ENCODE measurements at regions of chr12 and their contacts with region 1.

Region 1: GRCh38 chr12:123633379-123634141 is at the starts of genes EIF2B1 and GTF2H3:
- DNase-seq: peak; percentile 88 to 99 (median 97)
- ATAC-seq: peak; percentile 94
- H3K4me3 ChIP-seq: peak within 1 kb of the TSS; percentile 77 to 79
- H3K4me3 Mint-ChIP-seq: peak within 1 kb of the TSS; percentile 92
- H3K27ac ChIP-seq: peak within 1 kb of the TSS; percentile 90 to 93
- H3K27ac Mint-ChIP-seq: peak within 1 kb of the TSS; percentile 98
- H3K4me1 ChIP-seq: peaks cover 21% of the 10 kb centered on the region
- H3K4me1 Mint-ChIP-seq: peaks cover 42% of the 10 kb centered on the region
- H3K27me3 ChIP-seq: no peaks in the 10 kb centered on the region
- H3K27me3 Mint-ChIP-seq: no peaks in the 10 kb centered on the region
- CTCF ChIP-seq: no peak
- total RNA-seq, gene EIF2B1: 35.9 to 40.0 TPM
- total RNA-seq, gene GTF2H3: 11.8 to 15.2 TPM

Region 2: DNA sequence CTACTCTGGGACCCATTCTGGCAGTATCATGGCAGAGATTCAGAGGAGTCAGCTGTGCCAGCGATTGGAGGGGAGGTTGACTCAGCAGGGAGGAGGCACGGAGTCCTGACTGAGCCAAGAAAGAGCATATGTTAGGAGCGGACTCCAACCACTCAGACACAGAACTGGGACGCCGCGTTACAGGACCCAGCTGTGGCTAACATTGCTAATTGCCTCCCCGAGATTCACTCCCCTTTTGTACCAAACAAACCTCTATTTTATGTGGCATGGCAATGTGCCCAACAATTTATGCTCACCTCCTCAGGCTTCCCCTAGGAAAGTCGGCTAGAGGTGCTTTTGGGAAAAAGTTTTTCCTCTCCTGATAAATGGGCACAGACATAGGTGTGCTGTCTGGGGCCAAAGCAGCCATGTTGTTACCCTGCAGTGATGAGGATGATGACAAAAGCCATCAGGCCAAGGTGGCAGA is 1195.9 kb before region 1 on chr12:
- CTCF ChIA-PET with region 1: no interaction called
- POLR2A ChIA-PET with region 1: no interaction called
- intact Hi-C with region 1: no loop called
- DNase-seq: no peak
- ATAC-seq: no peak
- H3K4me3 ChIP-seq: no peak overlapping the region
- H3K4me3 Mint-ChIP-seq: no peak overlapping the region
- H3K27ac ChIP-seq: no peak overlapping the region
- H3K27ac Mint-ChIP-seq: no peak overlapping the region
- H3K4me1 ChIP-seq: no peaks in the 10 kb centered on the region
- H3K4me1 Mint-ChIP-seq: no peaks in the 10 kb centered on the region
- H3K27me3 ChIP-seq: peaks cover 0 to 2% of the 10 kb centered on the region in 2 experiments
- H3K27me3 Mint-ChIP-seq: no peaks in the 10 kb centered on the region
- CTCF ChIP-seq: no peak

Region 3: GRCh38 chr12:122974274-122974891 is 659.2 kb before region 1 on chr12:
- CTCF ChIA-PET with region 1: no interaction called
- POLR2A ChIA-PET with region 1: no interaction called
- intact Hi-C with region 1: loop called (anchors 2 kb)
- DNase-seq: peak; percentile 97 to 100 (median 99)
- ATAC-seq: peak; percentile 85
- H3K4me3 ChIP-seq: peak overlapping the region; percentile 91 to 93
- H3K4me3 Mint-ChIP-seq: peak overlapping the region; percentile 98
- H3K27ac ChIP-seq: peak overlapping the region; percentile 93 to 97
- H3K27ac Mint-ChIP-seq: peak overlapping the region; percentile 98
- H3K4me1 ChIP-seq: peaks cover 26% of the 10 kb centered on the region
- H3K4me1 Mint-ChIP-seq: peaks cover 31% of the 10 kb centered on the region
- H3K27me3 ChIP-seq: no peaks in the 10 kb centered on the region
- H3K27me3 Mint-ChIP-seq: no peaks in the 10 kb centered on the region
- CTCF ChIP-seq: no peak

Region 4: GRCh38 chr12:123601602-123602489 is 31.7 kb before region 1 on chr12 and contains the start of gene DDX55:
- CTCF ChIA-PET with region 1: no interaction called
- POLR2A ChIA-PET with region 1: no interaction called
- intact Hi-C with region 1: loop called (anchors 1 kb)
- DNase-seq: peak; percentile 71 to 94 (median 87)
- ATAC-seq: peak; percentile 93
- H3K4me3 ChIP-seq: peak within 1 kb of the TSS; percentile 92 to 94
- H3K4me3 Mint-ChIP-seq: peak within 1 kb of the TSS; percentile 98
- H3K27ac ChIP-seq: peak within 1 kb of the TSS; percentile 78 to 89
- H3K27ac Mint-ChIP-seq: peak within 1 kb of the TSS; percentile 94
- H3K4me1 ChIP-seq: peaks cover 16% of the 10 kb centered on the region
- H3K4me1 Mint-ChIP-seq: peaks cover 31% of the 10 kb centered on the region
- H3K27me3 ChIP-seq: no peaks in the 10 kb centered on the region
- H3K27me3 Mint-ChIP-seq: no peaks in the 10 kb centered on the region
- CTCF ChIP-seq: peak; percentile 42
- total RNA-seq, gene DDX55: 41.1 to 44.5 TPM

Region 5: GRCh38 chr12:123670882-123671728 is 37.5 kb after region 1 on chr12 and contains the start of gene TCTN2:
- CTCF ChIA-PET with region 1: no interaction called
- POLR2A ChIA-PET with region 1: no interaction called
- intact Hi-C with region 1: loop called (anchors 1 kb)
- DNase-seq: peak; percentile 86 to 95 (median 94)
- ATAC-seq: peak; percentile 100
- H3K4me3 ChIP-seq: peak within 1 kb of the TSS; percentile 91 to 92
- H3K4me3 Mint-ChIP-seq: peak within 1 kb of the TSS; percentile 87
- H3K27ac ChIP-seq: peak within 1 kb of the TSS in 1 of 2 experiments; percentile 41
- H3K27ac Mint-ChIP-seq: peak within 1 kb of the TSS; percentile 69
- H3K4me1 ChIP-seq: peaks cover 11% of the 10 kb centered on the region
- H3K4me1 Mint-ChIP-seq: peaks cover 17% of the 10 kb centered on the region
- H3K27me3 ChIP-seq: no peaks in the 10 kb centered on the region
- H3K27me3 Mint-ChIP-seq: no peaks in the 10 kb centered on the region
- CTCF ChIP-seq: no peak
- total RNA-seq, gene TCTN2: 1.9 to 3.3 TPM

Region 6: GRCh38 chr12:123713398-123713797 is 79.8 kb after region 1 on chr12:
- CTCF ChIA-PET with region 1: no interaction called
- POLR2A ChIA-PET with region 1: interaction called, 3 read pairs
- intact Hi-C with region 1: loop called (anchors 1 kb)
- DNase-seq: peak in 1 of 9 experiments; percentile 21
- ATAC-seq: no peak
- H3K4me3 ChIP-seq: peak overlapping the region; percentile 69 to 98
- H3K4me3 Mint-ChIP-seq: peak overlapping the region; percentile 84
- H3K27ac ChIP-seq: no peak overlapping the region
- H3K27ac Mint-ChIP-seq: peak overlapping the region; percentile 86
- H3K4me1 ChIP-seq: peaks cover 22% of the 10 kb centered on the region
- H3K4me1 Mint-ChIP-seq: peaks cover 45% of the 10 kb centered on the region
- H3K27me3 ChIP-seq: no peaks in the 10 kb centered on the region
- H3K27me3 Mint-ChIP-seq: no peaks in the 10 kb centered on the region
- CTCF ChIP-seq: no peak

Region 7: GRCh38 chr12:123761841-123762714 is 128.5 kb after region 1 on chr12 and contains the start of gene DNAH10:
- CTCF ChIA-PET with region 1: no interaction called
- POLR2A ChIA-PET with region 1: no interaction called
- intact Hi-C with region 1: loop called in 1 of 2 experiments (anchors 1 kb)
- DNase-seq: peak in 8 of 9 experiments; percentile 8 to 65 (median 36)
- ATAC-seq: peak; percentile 77
- H3K4me3 ChIP-seq: peak within 1 kb of the TSS; percentile 51 to 54
- H3K4me3 Mint-ChIP-seq: peak within 1 kb of the TSS; percentile 85
- H3K27ac ChIP-seq: no peak within 1 kb of the TSS
- H3K27ac Mint-ChIP-seq: no peak within 1 kb of the TSS
- H3K4me1 ChIP-seq: peaks cover 7% of the 10 kb centered on the region
- H3K4me1 Mint-ChIP-seq: peaks cover 4% of the 10 kb centered on the region
- H3K27me3 ChIP-seq: peaks cover 0 to 2% of the 10 kb centered on the region in 2 experiments
- H3K27me3 Mint-ChIP-seq: no peaks in the 10 kb centered on the region
- CTCF ChIP-seq: no peak
- total RNA-seq, gene DNAH10: 0.16 to 0.19 TPM

Region 8: GRCh38 chr12:123972457-123973401 is 339.2 kb after region 1 on chr12 and contains the starts of genes CCDC92 and ZNF664:
- CTCF ChIA-PET with region 1: no interaction called
- POLR2A ChIA-PET with region 1: no interaction called
- intact Hi-C with region 1: loop called in 1 of 2 experiments (anchors 5 kb)
- DNase-seq: peak; percentile 88 to 98 (median 95)
- ATAC-seq: peak; percentile 75
- H3K4me3 ChIP-seq: peak within 1 kb of the TSS; percentile 60 to 63
- H3K4me3 Mint-ChIP-seq: peak within 1 kb of the TSS; percentile 91
- H3K27ac ChIP-seq: peak within 1 kb of the TSS; percentile 34 to 44
- H3K27ac Mint-ChIP-seq: peak within 1 kb of the TSS; percentile 89
- H3K4me1 ChIP-seq: peaks cover 19% of the 10 kb centered on the region
- H3K4me1 Mint-ChIP-seq: peaks cover 36% of the 10 kb centered on the region
- H3K27me3 ChIP-seq: no peaks in the 10 kb centered on the region
- H3K27me3 Mint-ChIP-seq: no peaks in the 10 kb centered on the region
- CTCF ChIP-seq: no peak
- total RNA-seq, gene CCDC92: 6.9 to 8.1 TPM
- total RNA-seq, gene ZNF664: 14.2 to 17.9 TPM

Measured in CD8-positive, alpha-beta T cell (primary cell).